ENCODE measurements at regions of chr2 and their contacts with region 1.

Region 1: DNA sequence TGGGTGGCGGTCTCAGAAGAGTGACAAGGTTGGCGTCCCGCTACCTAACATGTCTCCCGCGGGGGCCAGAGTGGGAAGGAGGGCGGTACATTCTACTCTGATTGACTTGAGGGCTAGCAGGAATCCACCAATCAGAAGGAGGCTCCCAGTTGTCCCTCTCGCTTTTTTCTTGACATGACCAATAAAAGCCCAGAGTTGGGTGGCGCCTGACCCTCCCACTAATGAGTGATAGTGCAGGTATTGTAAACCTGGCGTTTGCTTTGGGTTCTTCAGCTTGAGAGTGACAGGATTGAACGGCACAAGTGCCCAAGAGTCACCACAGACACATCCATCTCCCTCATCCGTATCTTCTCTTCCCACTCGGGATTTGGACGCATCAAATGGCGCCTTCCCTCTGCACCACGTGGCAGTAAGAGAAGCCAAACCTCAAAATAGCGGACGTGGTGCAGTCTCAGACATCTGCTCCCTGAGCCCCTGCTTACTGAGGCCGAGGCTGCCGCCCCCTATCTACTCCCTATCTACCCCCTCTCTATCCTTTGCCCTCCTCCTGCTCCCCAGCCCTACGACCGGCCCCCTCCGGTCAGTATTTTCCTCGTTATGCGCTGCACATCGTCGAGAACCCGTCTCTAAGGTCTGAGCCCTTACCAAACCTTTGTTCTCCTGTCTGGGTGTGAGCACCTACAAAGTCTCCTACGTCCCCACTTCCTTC is 768 bp upstream of the FAM161A start:
- DNase-seq: peak; percentile 96
- H3K4me3 ChIP-seq: peak overlapping the region; percentile 75 to 91 (median 81)
- H3K27ac ChIP-seq: peak overlapping the region; percentile 88 to 94 (median 91)
- H3K4me1 ChIP-seq: peaks cover 0 to 16% (median 15%) of the 10 kb centered on the region in 4 donors
- H3K27me3 ChIP-seq: no peaks in the 10 kb centered on the region
- CTCF ChIP-seq: no peak
- EP300 ChIP-seq: no peak
- POLR2A ChIP-seq: no peak

Region 2: DNA sequence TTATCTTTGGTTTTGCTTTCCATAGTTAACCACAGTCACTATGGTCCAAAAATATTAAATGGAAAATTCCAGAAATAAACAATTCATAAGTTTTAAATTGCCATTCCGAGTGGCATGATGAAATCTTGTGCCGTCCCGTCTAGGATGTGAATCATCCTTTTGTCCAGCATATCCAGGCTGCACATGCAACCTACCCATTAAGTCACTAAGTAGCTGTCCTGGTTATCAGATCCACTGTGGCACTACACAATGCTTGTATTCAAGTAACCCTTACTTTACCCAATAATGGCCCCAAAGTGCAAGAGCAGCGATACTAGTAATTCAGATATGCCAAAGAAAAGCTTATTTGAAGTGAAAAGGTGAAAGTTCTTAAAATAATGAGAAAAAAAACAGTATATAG is 394.5 kb before region 1 on chr2:
- intact Hi-C with region 1: loop called (anchors 10 kb)
- DNase-seq: no peak
- H3K4me3 ChIP-seq: no peak overlapping the region
- H3K27ac ChIP-seq: no peak overlapping the region
- H3K4me1 ChIP-seq: peaks cover 35 to 85% (median 74%) of the 10 kb centered on the region in 4 donors
- H3K27me3 ChIP-seq: no peaks in the 10 kb centered on the region
- CTCF ChIP-seq: no peak
- EP300 ChIP-seq: no peak
- POLR2A ChIP-seq: no peak

Region 3: DNA sequence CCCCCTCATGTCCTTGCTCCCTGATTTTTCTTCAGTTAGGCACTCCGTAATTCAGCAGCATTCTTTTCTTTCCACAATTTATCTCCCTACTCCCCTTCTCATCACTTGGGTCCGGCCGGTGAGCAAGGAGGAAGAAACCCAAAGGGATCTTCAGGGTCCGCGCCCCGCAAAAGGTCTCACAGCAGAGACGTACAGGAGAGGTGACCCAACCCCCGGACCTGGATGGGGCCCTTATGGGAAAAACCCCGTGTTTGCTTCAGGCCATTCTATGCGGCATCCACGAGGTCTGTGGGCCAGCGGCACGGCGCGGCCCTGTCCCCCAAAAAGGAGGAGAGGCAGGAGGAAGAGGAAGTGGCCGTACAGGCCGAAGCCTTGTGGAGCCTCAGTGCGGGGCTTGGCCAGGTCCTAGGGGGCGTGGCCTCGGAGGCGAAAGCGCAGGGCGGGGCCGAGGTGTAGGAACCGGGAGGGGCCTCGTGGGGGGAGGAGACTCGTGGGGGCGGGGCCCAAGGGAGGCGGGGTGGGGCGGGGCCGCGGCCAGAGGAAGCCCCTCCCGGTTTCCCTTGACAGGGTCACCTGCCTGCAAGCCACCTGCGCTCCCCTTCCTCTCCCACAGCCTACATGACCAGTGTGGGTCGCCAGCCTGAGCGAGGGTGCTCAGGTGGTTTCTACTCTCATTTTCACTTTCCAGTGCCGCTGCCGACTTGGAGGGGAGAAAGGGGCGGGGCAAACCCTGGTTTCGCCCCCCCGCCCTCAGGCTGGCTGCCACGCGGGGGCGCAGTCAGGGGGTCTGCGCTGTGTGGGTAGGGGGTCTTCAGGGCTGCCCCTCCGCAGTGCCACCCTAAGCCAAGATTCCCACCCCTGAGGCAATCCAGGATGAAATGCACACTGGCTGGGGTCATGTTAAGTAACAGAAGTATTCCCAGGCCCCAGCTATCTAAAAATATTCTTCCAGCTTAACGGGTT is 160.0 kb before region 1 on chr2:
- intact Hi-C with region 1: loop called (anchors 10 kb)
- DNase-seq: peak; percentile 97
- H3K4me3 ChIP-seq: peak overlapping the region; percentile 72 to 87 (median 84)
- H3K27ac ChIP-seq: peak overlapping the region; percentile 79 to 85 (median 82)
- H3K4me1 ChIP-seq: peaks cover 0 to 15% (median 13%) of the 10 kb centered on the region in 4 donors
- H3K27me3 ChIP-seq: no peaks in the 10 kb centered on the region
- CTCF ChIP-seq: peak; percentile 42 to 61 (median 56)
- EP300 ChIP-seq: no peak
- POLR2A ChIP-seq: no peak

Region 4: GRCh38 chr2:61764035-61764800 is 90.4 kb before region 1 on chr2:
- intact Hi-C with region 1: loop called (anchors 10 kb)
- DNase-seq: peak; percentile 99
- H3K4me3 ChIP-seq: peak overlapping the region; percentile 64 to 69 (median 68)
- H3K27ac ChIP-seq: peak overlapping the region; percentile 95 to 97 (median 96)
- H3K4me1 ChIP-seq: peaks cover 0 to 17% (median 10%) of the 10 kb centered on the region in 4 donors
- H3K27me3 ChIP-seq: no peaks in the 10 kb centered on the region
- CTCF ChIP-seq: no peak
- EP300 ChIP-seq: peak; percentile 35
- POLR2A ChIP-seq: peak; percentile 80

Region 5: GRCh38 chr2:61888267-61889055 is 33.8 kb after region 1 on chr2 and contains the start of gene CCT4:
- intact Hi-C with region 1: no loop called
- DNase-seq: peak; percentile 96
- H3K4me3 ChIP-seq: peak within 1 kb of the TSS; percentile 68 to 85 (median 72)
- H3K27ac ChIP-seq: peak within 1 kb of the TSS; percentile 92 to 99 (median 94)
- H3K4me1 ChIP-seq: peaks cover 17 to 26% (median 20%) of the 10 kb centered on the region in 4 donors
- H3K27me3 ChIP-seq: no peaks in the 10 kb centered on the region
- CTCF ChIP-seq: no peak
- EP300 ChIP-seq: no peak
- POLR2A ChIP-seq: peak; percentile 51
- total RNA-seq, gene CCT4: 74.4 to 86.8 (median 79.5) TPM